Astrocyte of the cerebellum (primary cell): ENCODE measurements at regions of chr6 and their contacts with region 1.

Region 1: GRCh38 chr6:33894438-33894837 is 90.6 kb upstream of the MLN start:
- DNase-seq: peak; percentile 9
- H3K4me3 ChIP-seq: no peak overlapping the region
- CTCF ChIP-seq: no peak

Region 2: DNA sequence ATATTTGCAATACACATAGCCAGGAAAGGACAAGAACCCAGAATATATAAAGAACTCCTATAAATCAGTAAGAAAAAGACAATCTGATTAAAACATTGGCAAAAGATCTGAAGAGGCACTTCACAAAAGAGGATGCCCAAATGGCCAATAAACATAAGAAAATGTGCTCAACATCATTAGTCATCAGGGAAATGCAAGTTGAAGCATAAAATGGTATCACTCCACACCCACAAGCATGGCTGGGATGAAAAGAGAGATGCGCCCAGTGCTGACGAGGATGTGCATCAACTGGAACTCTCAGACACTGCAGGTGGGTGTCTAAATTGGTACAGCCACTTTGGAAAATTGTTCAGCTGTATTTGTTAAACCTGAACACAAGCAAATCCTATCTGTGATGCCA is 48.2 kb before region 1 on chr6:
- in situ Hi-C with region 1: loop called (anchors 5 kb)
- DNase-seq: no peak
- H3K4me3 ChIP-seq: no peak overlapping the region
- CTCF ChIP-seq: no peak